Endothelial cell of umbilical vein (primary cell): ENCODE measurements at regions of chr4 and their contacts with region 1.

Region 1: DNA sequence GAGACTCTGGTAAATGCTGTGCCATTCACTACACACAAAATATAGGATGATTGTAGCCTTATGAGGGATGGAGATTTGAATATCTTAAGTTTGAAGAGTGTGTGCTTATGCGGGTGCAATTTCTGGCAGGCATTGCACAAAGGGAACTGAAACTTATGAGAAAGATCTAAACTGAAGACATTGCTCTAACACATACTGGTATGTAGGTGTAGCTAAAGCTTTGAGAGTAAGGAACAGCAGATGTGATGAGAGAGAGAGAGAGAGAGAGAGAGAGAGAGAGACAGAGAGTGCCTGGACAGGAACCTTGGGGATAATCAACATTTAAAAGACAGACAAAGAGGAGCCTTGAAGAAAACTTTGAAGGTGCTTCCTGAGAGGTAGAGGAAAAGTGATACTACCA is 379.7 kb downstream of the SPRY1 start:
- DNase-seq: no peak
- H3K4me3 ChIP-seq: no peak overlapping the region
- H3K27ac ChIP-seq: no peak overlapping the region
- H3K4me1 ChIP-seq: peaks cover 11% of the 10 kb centered on the region
- H3K27me3 ChIP-seq: no peaks in the 10 kb centered on the region
- CTCF ChIP-seq: no peak
- POLR2A ChIP-seq: no peak

Region 2: GRCh38 chr4:123260653-123261052 is 515.6 kb before region 1 on chr4:
- CTCF ChIA-PET with region 1: no interaction called
- POLR2A ChIA-PET with region 1: no interaction called
- dilution Hi-C with region 1: no loop called
- intact Hi-C with region 1: no loop called
- DNase-seq: no peak
- H3K4me3 ChIP-seq: no peak overlapping the region
- H3K27ac ChIP-seq: no peak overlapping the region
- H3K4me1 ChIP-seq: peaks cover 12% of the 10 kb centered on the region
- H3K27me3 ChIP-seq: no peaks in the 10 kb centered on the region
- CTCF ChIP-seq: no peak
- POLR2A ChIP-seq: no peak

Region 3: DNA sequence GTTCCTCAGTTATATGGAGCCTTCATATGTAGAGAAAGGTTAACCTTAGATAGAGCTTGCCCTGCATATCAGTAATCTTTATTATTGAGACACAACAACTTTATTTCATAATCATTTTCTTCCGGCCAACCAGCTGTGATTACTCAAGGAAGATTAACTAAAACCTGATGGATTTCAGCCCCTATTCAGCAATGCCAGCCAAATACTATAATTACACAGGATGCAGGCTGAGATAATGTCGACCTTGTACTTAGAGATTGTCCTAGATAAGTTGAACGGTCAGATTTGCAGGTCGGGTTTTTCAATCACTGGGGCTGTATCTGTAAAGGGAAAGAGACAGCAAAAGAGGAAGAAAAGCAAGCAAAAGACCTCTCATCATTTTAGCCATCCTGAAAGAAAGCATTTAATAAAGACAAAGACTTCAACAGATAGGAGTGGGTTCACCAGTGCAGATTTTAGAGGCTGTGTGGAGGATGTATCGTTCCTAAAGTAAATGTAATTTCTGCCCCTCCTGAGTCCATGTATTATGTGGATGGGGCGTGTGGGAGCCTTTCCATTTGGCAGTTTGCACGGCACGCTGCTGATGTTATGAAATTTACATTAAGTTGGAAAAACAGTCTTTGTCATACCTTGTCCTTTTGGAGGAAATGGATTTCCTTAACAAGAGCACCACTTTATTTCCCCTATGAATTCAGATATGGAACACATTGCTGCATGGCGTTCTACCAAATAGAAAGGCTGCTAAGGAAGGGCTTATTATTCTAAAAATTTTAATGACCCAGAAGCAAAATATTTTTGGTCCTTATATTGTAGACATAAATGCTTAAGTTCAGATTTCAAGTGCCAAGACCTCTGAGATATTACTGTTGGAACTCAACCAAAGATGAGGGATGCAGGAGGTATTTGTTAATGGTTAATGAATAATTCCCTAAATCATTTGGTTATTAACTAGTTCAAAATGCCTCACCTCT is 117.0 kb after region 1 on chr4:
- CTCF ChIA-PET with region 1: interaction called, 4 read pairs
- POLR2A ChIA-PET with region 1: no interaction called
- dilution Hi-C with region 1: no loop called
- intact Hi-C with region 1: loop called (anchors 2 kb)
- DNase-seq: peak; percentile 87
- H3K4me3 ChIP-seq: peak overlapping the region in 1 of 3 experiments; percentile 26
- H3K27ac ChIP-seq: peak overlapping the region; percentile 96
- H3K4me1 ChIP-seq: peaks cover 69% of the 10 kb centered on the region
- H3K27me3 ChIP-seq: no peaks in the 10 kb centered on the region
- CTCF ChIP-seq: no peak
- POLR2A ChIP-seq: peak; percentile 43

Region 4: DNA sequence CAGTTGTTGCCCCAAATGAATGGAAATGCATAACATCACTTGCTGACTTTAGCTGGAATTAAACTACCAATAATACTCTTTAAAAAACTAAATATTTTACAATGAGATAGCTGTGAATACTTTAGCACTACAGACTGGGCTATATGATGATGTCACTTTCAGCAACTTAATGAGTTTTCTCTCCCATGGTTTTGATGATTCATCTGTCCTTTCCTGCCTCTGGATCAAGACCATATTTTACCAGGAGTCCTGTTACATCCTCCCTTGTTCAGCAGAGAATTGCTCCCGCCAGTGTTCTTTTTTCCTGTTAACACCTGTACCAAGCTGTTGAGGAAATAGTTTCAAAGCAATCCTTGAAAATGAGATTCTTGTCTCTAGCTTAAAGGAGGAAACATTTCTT is 163.4 kb after region 1 on chr4:
- CTCF ChIA-PET with region 1: interaction called, 6 read pairs
- POLR2A ChIA-PET with region 1: no interaction called
- dilution Hi-C with region 1: no loop called
- intact Hi-C with region 1: loop called (anchors 2 kb)
- DNase-seq: peak; percentile 86
- H3K4me3 ChIP-seq: no peak overlapping the region
- H3K27ac ChIP-seq: peak overlapping the region; percentile 79
- H3K4me1 ChIP-seq: peaks cover 35% of the 10 kb centered on the region
- H3K27me3 ChIP-seq: no peaks in the 10 kb centered on the region
- CTCF ChIP-seq: no peak
- POLR2A ChIP-seq: no peak

Region 5: GRCh38 chr4:124262211-124263179 is 486.2 kb after region 1 on chr4:
- CTCF ChIA-PET with region 1: interaction called, 4 read pairs
- POLR2A ChIA-PET with region 1: no interaction called
- dilution Hi-C with region 1: no loop called
- intact Hi-C with region 1: loop called (anchors 2 kb)
- DNase-seq: peak; percentile 86
- H3K4me3 ChIP-seq: no peak overlapping the region
- H3K27ac ChIP-seq: no peak overlapping the region
- H3K4me1 ChIP-seq: no peaks in the 10 kb centered on the region
- H3K27me3 ChIP-seq: no peaks in the 10 kb centered on the region
- CTCF ChIP-seq: peak; percentile 70 to 87
- POLR2A ChIP-seq: no peak